ENCODE measurements at regions of chr22 and their contacts with region 1.

Region 1: DNA sequence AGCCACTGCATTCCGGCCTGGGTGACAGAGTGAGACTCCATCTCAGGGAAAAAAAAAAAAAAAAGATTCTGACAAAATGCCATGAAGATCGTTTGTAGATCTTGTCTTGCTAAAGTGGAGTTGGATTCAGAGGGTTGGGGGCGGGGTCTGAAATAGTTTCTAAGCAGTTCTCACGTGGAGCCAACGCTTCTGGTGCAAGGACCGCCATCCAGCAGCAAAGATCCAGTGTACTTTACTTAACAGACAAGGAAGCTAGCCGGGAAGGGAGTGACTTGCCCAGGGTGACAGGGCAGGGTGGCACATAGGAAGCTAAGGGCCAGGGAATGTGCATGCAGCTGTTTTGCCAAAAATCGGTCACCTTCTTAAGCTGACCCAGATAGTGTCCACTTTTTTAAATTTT is 27.4 kb downstream of the APOL1 start:
- DNase-seq: no peak
- ATAC-seq: no peak
- H3K4me3 ChIP-seq: no peak overlapping the region
- H3K27ac ChIP-seq: no peak overlapping the region
- H3K4me1 ChIP-seq: peaks cover 4% of the 10 kb centered on the region; the same call in 1 of the 2 replicates
- H3K27me3 ChIP-seq: no peaks in the 10 kb centered on the region
- CTCF ChIP-seq: no peak

Region 2: DNA sequence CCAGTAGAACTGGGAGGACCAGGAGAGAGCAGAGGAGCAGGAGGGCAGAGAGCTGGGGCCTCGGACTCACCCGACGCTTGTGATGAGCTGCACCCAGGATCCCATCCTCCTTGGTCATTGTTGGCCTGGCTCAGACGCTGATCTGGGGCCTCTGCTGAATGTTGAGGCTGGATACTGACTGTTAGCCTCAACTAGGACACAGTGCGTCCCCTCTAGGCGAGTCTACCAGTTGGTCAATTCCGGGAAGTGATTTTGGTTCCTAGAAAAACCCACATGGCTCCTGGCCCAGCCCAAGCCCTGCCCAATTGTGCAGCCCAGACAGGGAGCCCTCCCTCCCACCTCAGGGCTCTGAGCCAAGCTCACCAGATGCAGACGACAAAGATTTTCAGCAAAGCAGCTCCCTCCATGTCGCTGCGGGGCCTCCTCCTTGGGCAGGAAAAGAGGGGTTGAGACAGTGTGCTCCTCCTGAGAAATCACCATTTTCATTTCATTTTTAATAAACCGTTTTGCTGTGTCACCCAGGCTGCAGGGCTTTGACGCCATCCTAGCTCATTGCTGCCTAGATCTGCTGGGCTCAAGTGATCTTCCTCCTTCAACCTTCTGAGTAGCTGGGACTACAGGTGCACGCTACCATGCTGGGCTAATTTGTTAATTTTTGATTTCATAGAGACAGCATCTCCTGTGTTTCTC is 78.6 kb before region 1 on chr22 and contains the start of gene APOL4:
- CTCF ChIA-PET with region 1: no interaction called
- POLR2A ChIA-PET with region 1: no interaction called
- in situ Hi-C with region 1: no loop called
- intact Hi-C with region 1: no loop called
- DNase-seq: no peak
- ATAC-seq: no peak
- H3K4me3 ChIP-seq: no peak within 1 kb of the TSS
- H3K27ac ChIP-seq: no peak within 1 kb of the TSS
- H3K4me1 ChIP-seq: no peaks in the 10 kb centered on the region
- H3K27me3 ChIP-seq: no peaks in the 10 kb centered on the region
- CTCF ChIP-seq: no peak
- total RNA-seq, gene APOL4: not detected

Region 3: GRCh38 chr22:36252754-36253517 is 27.4 kb before region 1 on chr22 and contains the start of gene APOL1:
- CTCF ChIA-PET with region 1: no interaction called
- POLR2A ChIA-PET with region 1: interaction called, 15 read pairs
- in situ Hi-C with region 1: no loop called
- intact Hi-C with region 1: no loop called
- DNase-seq: no peak
- ATAC-seq: peak; percentile 93
- H3K4me3 ChIP-seq: peak within 1 kb of the TSS; percentile 33 to 66
- H3K27ac ChIP-seq: peak within 1 kb of the TSS; percentile 76
- H3K4me1 ChIP-seq: peaks cover 5% of the 10 kb centered on the region; the same call in 1 of the 2 replicates
- H3K27me3 ChIP-seq: no peaks in the 10 kb centered on the region
- CTCF ChIP-seq: no peak
- total RNA-seq, gene APOL1: 16.0 TPM